Gastrocnemius medialis (tissue), 4 donors: ENCODE measurements at regions of chr2 and their contacts with region 1.

Region 1: DNA sequence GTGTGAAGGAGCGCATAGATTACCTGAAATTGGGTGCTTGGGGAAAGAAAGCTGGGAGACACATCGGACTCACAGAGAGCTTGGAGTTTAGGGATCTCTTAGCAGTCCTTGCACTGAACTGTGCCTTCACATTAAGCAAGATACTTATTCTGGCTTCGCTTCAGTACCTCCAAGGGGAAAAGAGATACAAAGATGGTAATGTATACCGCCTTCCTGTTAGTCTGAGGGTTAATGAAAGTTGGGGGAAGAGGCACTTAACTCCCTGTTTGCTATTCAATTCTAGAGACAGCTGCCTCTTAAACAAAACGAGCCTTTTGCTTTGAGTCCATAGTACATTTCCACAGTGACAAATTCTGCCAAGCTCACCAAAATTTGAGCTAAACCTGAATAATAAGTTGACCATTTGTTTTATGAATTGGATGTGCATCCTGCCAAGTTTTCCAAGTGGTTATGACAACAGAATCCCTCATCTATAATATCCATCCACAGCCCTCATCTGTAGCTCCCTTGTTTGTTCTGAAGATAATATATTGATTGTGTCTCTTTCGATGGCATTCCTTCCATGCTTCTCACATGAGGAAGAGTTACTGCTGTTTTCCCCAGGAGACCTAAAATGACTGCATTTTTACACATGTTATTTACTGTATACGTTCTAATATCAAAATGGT is 287.1 kb upstream of the ATP5MC3 start:
- DNase-seq: no peak
- ATAC-seq: no peak
- H3K4me3 ChIP-seq: no peak overlapping the region
- H3K27ac ChIP-seq: no peak overlapping the region
- H3K4me1 ChIP-seq: no peaks in the 10 kb centered on the region
- H3K27me3 ChIP-seq: no peaks in the 10 kb centered on the region
- CTCF ChIP-seq: no peak
- POLR2A ChIP-seq: no peak

Region 2: DNA sequence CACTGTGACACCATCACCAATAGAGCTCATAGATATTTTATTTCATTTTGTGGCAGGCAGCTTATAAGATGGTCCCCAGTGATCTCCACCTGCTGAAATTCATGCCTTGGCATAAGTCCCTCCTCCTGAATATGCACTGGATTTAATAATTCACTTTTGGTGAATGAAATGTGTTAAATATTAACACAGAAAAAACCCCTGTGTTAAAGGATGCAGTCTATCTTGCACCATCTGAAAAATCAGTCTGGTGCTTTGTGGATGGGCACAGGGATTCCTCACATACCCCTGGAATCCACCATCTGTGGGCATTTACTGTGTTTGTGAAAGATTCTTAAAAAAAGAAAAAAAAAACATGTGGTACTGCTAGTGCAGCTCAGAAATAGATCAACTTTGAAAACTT is 844.9 kb before region 1 on chr2:
- in situ Hi-C with region 1: no loop called
- intact Hi-C with region 1: no loop called
- DNase-seq: no peak
- ATAC-seq: no peak
- H3K4me3 ChIP-seq: no peak overlapping the region
- H3K27ac ChIP-seq: no peak overlapping the region
- H3K4me1 ChIP-seq: no peaks in the 10 kb centered on the region
- H3K27me3 ChIP-seq: no peaks in the 10 kb centered on the region
- CTCF ChIP-seq: no peak
- POLR2A ChIP-seq: no peak

Region 3: GRCh38 chr2:175445281-175445680 is 23.3 kb before region 1 on chr2:
- in situ Hi-C with region 1: no loop called
- intact Hi-C with region 1: loop called (anchors 1 kb)
- DNase-seq: no peak
- ATAC-seq: no peak
- H3K4me3 ChIP-seq: no peak overlapping the region
- H3K27ac ChIP-seq: no peak overlapping the region
- H3K4me1 ChIP-seq: no peaks in the 10 kb centered on the region
- H3K27me3 ChIP-seq: no peaks in the 10 kb centered on the region
- CTCF ChIP-seq: no peak
- POLR2A ChIP-seq: no peak

Region 4: DNA sequence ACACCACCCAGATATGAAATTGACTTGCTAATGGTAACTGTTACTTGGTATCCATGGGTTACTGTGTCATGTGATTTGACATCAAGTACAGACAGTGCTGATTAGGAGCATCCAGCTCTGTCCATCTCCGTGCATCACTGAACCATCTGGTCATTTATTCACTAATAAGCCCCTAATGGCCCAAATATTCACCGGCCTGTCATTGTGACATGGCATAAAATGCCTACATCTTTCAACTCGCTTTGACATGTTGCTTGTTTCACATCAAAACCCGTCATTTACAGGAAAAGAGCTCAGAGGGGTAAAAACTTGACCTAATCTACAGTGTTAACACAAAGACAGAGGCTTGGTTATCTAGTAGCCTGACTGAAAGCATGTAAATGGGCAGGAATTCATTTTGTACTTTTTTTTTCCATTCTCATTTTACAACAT is 21.8 kb after region 1 on chr2:
- in situ Hi-C with region 1: no loop called
- intact Hi-C with region 1: no loop called
- DNase-seq: no peak
- ATAC-seq: no peak
- H3K4me3 ChIP-seq: no peak overlapping the region
- H3K27ac ChIP-seq: no peak overlapping the region
- H3K4me1 ChIP-seq: no peaks in the 10 kb centered on the region
- H3K27me3 ChIP-seq: no peaks in the 10 kb centered on the region
- CTCF ChIP-seq: no peak
- POLR2A ChIP-seq: no peak